Panc1 (cell line): ENCODE measurements at regions of chr4 and their contacts with region 1.

Region 1: GRCh38 chr4:42519803-42520417 is 122.6 kb downstream of the SHISA3 start:
- DNase-seq: peak; percentile 20
- ATAC-seq: peak; percentile 56; the same call in 1 of the 2 replicates
- H3K4me3 ChIP-seq: no peak overlapping the region
- H3K27ac ChIP-seq: no peak overlapping the region
- H3K4me1 ChIP-seq: no peaks in the 10 kb centered on the region
- H3K27me3 ChIP-seq: no peaks in the 10 kb centered on the region
- CTCF ChIP-seq: peak; percentile 45; the same call in 1 of the 2 replicates

Region 2: DNA sequence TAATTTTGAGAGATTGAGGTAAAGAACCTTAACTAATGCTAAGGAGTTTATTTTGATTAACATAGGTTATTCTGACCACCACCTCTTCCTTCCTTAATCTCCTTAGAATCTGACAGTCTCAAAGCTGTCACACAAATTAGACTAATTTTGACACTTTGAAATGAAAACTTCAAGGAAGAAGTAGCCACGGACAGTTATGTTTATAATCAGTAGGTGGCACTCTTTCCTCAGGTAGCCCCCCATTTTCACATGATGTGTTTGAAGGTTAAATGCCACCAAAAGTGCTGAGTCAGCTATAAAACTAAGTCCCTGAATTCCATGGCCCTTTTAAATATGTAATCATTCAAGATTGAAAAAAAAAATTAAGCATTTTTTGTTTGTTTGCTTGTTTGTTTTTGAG is 562.3 kb before region 1 on chr4:
- CTCF ChIA-PET with region 1: no interaction called
- POLR2A ChIA-PET with region 1: no interaction called
- in situ Hi-C with region 1: no loop called
- intact Hi-C with region 1: loop called (anchors 2 kb)
- DNase-seq: no peak
- ATAC-seq: no peak
- H3K4me3 ChIP-seq: no peak overlapping the region
- H3K27ac ChIP-seq: no peak overlapping the region
- H3K4me1 ChIP-seq: no peaks in the 10 kb centered on the region
- H3K27me3 ChIP-seq: no peaks in the 10 kb centered on the region
- CTCF ChIP-seq: peak; percentile 59; the same call in 1 of the 2 replicates

Region 3: GRCh38 chr4:42282081-42282901 is 237.6 kb before region 1 on chr4:
- CTCF ChIA-PET with region 1: no interaction called
- POLR2A ChIA-PET with region 1: no interaction called
- in situ Hi-C with region 1: no loop called
- intact Hi-C with region 1: loop called (anchors 1 kb)
- DNase-seq: no peak
- ATAC-seq: peak; percentile 86
- H3K4me3 ChIP-seq: no peak overlapping the region
- H3K27ac ChIP-seq: no peak overlapping the region
- H3K4me1 ChIP-seq: no peaks in the 10 kb centered on the region; the same call in 1 of the 2 replicates
- H3K27me3 ChIP-seq: no peaks in the 10 kb centered on the region
- CTCF ChIP-seq: peak; percentile 72

Region 4: GRCh38 chr4:42371306-42372252 is 148.3 kb before region 1 on chr4:
- CTCF ChIA-PET with region 1: interaction called, 14 read pairs
- POLR2A ChIA-PET with region 1: interaction called, 4 read pairs
- in situ Hi-C with region 1: no loop called
- intact Hi-C with region 1: loop called (anchors 2 kb)
- DNase-seq: peak; percentile 13
- ATAC-seq: no peak
- H3K4me3 ChIP-seq: no peak overlapping the region
- H3K27ac ChIP-seq: no peak overlapping the region
- H3K4me1 ChIP-seq: no peaks in the 10 kb centered on the region
- H3K27me3 ChIP-seq: no peaks in the 10 kb centered on the region
- CTCF ChIP-seq: peak; percentile 55; the same call in 1 of the 2 replicates

Region 5: GRCh38 chr4:42732776-42733175 is 212.9 kb after region 1 on chr4:
- CTCF ChIA-PET with region 1: interaction called, 11 read pairs
- POLR2A ChIA-PET with region 1: no interaction called
- in situ Hi-C with region 1: no loop called
- intact Hi-C with region 1: no loop called
- DNase-seq: no peak
- ATAC-seq: no peak
- H3K4me3 ChIP-seq: no peak overlapping the region
- H3K27ac ChIP-seq: no peak overlapping the region
- H3K4me1 ChIP-seq: no peaks in the 10 kb centered on the region
- H3K27me3 ChIP-seq: no peaks in the 10 kb centered on the region
- CTCF ChIP-seq: no peak